SK-N-SH (cell line): ENCODE measurements at regions of chr17 and their contacts with region 1.

Region 1: DNA sequence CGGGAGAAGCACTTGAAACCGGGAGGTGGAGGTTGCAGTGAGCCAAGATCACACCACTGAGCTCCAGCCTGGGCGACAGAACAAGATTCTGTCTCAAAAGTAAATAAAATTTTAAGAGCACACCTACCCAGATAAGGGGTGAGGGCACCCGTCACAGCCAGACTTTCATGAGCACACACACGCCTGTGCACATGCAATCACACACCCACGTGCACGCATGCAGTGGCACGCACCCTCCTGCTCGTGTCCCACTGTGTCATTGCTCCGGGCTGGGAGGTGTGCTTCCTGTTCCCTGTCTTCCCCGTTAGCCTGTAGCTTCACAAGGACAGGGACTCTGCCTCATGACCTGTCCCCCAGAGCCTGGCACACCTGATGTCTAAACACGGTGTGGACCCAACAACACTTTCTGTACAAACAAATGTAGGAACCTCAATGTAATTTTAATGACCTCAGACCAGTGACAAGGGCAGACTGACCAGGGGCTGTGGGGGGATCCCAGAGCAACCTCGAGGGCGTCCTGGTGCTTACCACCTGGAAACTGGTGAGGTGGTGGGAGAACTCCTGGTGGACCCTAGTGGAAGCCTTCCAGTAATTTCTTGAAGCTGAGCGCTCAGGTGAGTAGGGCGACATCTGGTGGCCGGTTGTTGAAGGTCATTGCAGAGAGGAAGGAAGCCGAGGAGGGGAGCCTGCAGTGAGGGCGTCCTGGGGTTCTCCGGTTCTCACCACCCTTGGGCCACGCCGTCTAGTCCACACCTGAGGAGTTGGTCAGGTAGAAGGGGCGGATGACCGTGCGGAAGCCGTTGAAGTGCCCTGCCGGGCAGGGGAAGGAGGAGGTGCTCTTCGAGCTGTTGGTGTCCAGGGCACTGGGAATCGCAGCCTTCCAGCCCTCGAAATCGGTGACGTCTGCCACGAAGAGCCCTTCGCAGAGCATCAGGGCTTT is 8.6 kb downstream of the LGALS3BP start:
- DNase-seq: peak; percentile 93
- H3K4me3 ChIP-seq: peak overlapping the region in 1 of 2 experiments; percentile 9; a peak in 1 of 4 replicates
- H3K27ac ChIP-seq: peak overlapping the region; percentile 9 to 65; a peak in 3 of 4 replicates
- H3K4me1 ChIP-seq: peaks cover 0 to 29% of the 10 kb centered on the region in 2 experiments; a peak in 1 of 4 replicates
- H3K27me3 ChIP-seq: no peaks in the 10 kb centered on the region
- CTCF ChIP-seq: peak; percentile 97
- EP300 ChIP-seq: no peak
- RAD21 ChIP-seq: peak; percentile 96

Region 2: GRCh38 chr17:78736526-78737079 is 234.5 kb before region 1 on chr17:
- CTCF ChIA-PET with region 1: interaction called, 10 read pairs
- POLR2A ChIA-PET with region 1: no interaction called
- DNase-seq: no peak
- H3K4me3 ChIP-seq: no peak overlapping the region
- H3K27ac ChIP-seq: peak overlapping the region; percentile 83 to 85
- H3K4me1 ChIP-seq: peaks cover 33 to 54% of the 10 kb centered on the region in 2 experiments
- H3K27me3 ChIP-seq: no peaks in the 10 kb centered on the region
- CTCF ChIP-seq: no peak
- EP300 ChIP-seq: no peak
- RAD21 ChIP-seq: no peak

Region 3: GRCh38 chr17:78873519-78874340 is 97.4 kb before region 1 on chr17:
- CTCF ChIA-PET with region 1: interaction called, 458 read pairs
- POLR2A ChIA-PET with region 1: interaction called, 5 read pairs
- DNase-seq: peak; percentile 77
- H3K4me3 ChIP-seq: no peak overlapping the region
- H3K27ac ChIP-seq: peak overlapping the region; percentile 50 to 72; a peak in 3 of 4 replicates
- H3K4me1 ChIP-seq: peaks cover 30 to 38% of the 10 kb centered on the region in 2 experiments; a peak in 3 of 4 replicates
- H3K27me3 ChIP-seq: no peaks in the 10 kb centered on the region
- CTCF ChIP-seq: no peak
- EP300 ChIP-seq: peak; percentile 76 to 79; a peak in 2 of 4 replicates
- RAD21 ChIP-seq: peak; percentile 27

Region 4: DNA sequence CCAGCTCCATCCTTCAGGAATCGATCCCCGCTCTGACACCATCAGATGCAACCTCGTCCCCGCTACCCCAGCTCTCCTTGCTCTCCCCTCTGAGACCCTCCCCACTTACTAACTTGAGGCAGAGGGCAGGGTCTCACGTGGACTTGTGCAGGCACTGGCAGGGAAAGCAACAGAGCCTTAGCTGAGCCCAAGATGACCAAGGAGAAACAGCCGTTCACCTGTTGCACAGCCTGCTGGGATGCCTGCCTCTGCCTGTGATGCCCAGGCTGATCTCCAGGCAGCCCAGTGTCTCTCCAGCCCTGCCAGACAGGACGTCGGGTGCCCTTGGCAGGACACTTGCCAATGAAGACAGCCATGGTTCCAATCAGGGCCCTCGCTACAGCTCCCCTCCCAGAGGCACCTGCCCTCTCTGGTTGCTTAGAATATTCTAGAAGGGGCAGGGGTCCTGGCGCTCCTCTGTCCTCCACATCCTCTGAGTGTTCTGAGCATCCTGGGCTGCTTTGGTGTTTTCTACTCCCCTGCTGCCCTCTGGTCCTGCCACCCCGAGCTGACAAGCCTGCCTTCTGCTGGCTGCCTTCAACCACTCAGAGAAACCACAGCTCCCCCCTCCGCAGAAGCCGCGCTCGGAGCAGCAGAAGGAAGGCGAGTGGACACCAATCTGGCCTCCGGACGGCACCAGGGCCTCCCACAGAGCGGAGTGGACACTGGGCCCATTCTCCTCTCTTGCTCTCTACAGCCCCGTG is 74.8 kb before region 1 on chr17:
- CTCF ChIA-PET with region 1: interaction called, 28 read pairs
- POLR2A ChIA-PET with region 1: interaction called, 4 read pairs
- DNase-seq: peak; percentile 39
- H3K4me3 ChIP-seq: no peak overlapping the region
- H3K27ac ChIP-seq: peak overlapping the region in 1 of 2 experiments; percentile 22; a peak in 1 of 4 replicates
- H3K4me1 ChIP-seq: peaks cover 0 to 70% of the 10 kb centered on the region in 2 experiments; a peak in 2 of 4 replicates
- H3K27me3 ChIP-seq: no peaks in the 10 kb centered on the region
- CTCF ChIP-seq: no peak
- EP300 ChIP-seq: no peak
- RAD21 ChIP-seq: no peak

Region 5: DNA sequence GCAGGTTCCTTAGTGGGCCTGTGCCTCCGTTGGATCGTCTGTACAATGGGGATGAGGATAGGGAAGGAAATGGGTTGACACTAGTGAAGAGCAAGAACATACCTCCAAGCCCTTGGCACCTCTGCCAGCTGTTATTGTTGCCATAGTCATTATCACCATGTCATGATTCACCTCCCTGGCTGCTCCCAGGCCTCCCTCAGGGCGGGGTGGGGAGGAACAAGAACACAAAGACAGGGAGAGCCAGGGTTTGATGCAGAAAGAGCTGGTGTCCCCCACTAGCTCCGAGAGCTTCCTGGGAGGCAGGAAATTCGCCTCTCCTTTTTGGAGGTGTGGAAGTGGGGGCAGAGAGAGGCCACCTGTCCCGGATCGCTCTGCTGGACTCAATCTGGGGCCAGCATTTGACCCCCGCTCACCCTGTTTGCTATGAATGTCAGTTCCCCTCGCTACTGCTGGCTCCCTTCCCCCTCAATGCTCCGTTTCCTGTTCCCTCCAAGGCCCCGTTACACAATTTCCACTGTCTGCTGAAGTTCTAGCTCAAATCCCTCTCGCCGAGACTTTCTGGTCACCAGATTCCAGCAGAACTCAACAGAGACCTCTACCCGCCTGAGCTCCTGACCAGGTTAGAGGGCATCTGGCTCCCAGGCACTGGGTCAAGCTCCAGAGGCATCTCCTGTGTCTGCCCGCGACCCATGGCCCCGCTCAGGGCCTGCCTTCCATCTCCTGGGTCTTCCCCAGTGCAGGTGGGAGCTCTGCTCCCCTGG is 55.1 kb before region 1 on chr17:
- CTCF ChIA-PET with region 1: interaction called, 24 read pairs
- POLR2A ChIA-PET with region 1: interaction called, 3 read pairs
- DNase-seq: no peak
- H3K4me3 ChIP-seq: no peak overlapping the region
- H3K27ac ChIP-seq: peak overlapping the region; percentile 8 to 84; a peak in 3 of 4 replicates
- H3K4me1 ChIP-seq: peaks cover 10 to 60% of the 10 kb centered on the region in 2 experiments; a peak in 3 of 4 replicates
- H3K27me3 ChIP-seq: no peaks in the 10 kb centered on the region
- CTCF ChIP-seq: no peak
- EP300 ChIP-seq: no peak
- RAD21 ChIP-seq: no peak

Region 6: DNA sequence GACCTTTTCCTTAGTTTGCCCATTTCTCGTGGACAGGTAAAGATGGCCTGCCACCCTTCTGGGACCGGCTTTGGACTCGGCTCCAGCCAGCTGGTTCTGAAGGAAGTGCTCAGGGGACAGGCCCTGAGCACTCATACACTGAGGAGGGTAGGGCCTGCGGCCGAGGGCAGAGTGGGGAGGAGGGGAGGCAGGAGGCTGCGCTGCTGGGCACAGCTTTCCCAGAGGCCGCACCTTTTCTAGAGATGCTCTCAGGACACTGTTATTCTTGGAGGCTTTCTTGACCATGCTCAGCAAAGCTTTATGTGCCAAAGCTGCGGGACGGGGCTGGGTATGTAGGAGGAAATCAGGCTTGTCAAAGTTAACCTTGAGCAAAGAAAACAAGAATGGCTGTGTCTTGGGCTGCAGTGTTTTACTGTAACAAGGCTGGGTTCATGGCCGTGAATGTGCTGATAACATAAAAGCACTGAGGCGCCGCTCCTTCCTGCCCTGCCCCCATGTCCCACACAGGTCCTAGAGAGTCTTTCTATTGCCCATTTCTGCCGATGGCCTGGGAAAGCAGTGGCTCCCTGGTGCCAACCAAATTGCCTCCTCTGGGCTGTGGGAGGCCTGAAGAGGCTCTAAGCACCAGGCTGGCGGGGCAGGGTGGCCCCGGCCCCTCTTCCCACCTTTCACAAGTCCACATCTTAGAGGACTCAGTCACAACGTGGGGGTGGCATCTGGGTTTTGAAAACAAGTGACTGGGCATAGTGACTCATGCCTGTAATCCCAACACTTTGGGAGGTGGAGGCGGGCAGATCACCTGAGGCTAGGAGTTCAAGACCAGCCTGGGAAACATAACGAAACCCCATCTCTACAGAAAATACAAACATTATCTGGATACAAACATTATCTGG is 23.6 kb before region 1 on chr17:
- CTCF ChIA-PET with region 1: interaction called, 194 read pairs
- POLR2A ChIA-PET with region 1: no interaction called
- DNase-seq: peak; percentile 15
- H3K4me3 ChIP-seq: no peak overlapping the region
- H3K27ac ChIP-seq: no peak overlapping the region
- H3K4me1 ChIP-seq: no peaks in the 10 kb centered on the region
- H3K27me3 ChIP-seq: no peaks in the 10 kb centered on the region
- CTCF ChIP-seq: no peak
- EP300 ChIP-seq: no peak
- RAD21 ChIP-seq: no peak

Region 7: DNA sequence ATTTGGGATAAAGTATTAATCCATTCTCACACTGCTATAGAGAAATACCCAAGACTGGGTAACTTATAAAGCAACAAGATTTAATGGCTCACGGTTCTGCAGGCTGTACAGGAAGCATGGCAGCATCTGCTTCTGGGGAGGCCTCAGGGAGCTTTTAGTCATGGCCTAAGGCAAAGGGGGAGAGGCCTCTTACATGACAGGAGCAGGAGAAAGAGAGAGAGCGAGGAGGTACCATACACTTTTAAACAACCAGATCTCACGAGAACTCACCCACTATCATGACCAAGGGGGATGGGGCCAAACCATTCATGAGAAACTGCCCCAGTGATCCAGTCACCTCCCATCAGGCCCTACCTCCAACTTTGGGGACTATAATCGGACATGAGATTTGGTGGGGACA is 45.8 kb after region 1 on chr17:
- CTCF ChIA-PET with region 1: no interaction called
- POLR2A ChIA-PET with region 1: no interaction called
- DNase-seq: no peak
- H3K4me3 ChIP-seq: no peak overlapping the region
- H3K27ac ChIP-seq: no peak overlapping the region
- H3K4me1 ChIP-seq: peaks cover 0 to 4% of the 10 kb centered on the region in 2 experiments; a peak in 1 of 4 replicates
- H3K27me3 ChIP-seq: no peaks in the 10 kb centered on the region
- CTCF ChIP-seq: no peak
- EP300 ChIP-seq: no peak
- RAD21 ChIP-seq: no peak

Region 8: DNA sequence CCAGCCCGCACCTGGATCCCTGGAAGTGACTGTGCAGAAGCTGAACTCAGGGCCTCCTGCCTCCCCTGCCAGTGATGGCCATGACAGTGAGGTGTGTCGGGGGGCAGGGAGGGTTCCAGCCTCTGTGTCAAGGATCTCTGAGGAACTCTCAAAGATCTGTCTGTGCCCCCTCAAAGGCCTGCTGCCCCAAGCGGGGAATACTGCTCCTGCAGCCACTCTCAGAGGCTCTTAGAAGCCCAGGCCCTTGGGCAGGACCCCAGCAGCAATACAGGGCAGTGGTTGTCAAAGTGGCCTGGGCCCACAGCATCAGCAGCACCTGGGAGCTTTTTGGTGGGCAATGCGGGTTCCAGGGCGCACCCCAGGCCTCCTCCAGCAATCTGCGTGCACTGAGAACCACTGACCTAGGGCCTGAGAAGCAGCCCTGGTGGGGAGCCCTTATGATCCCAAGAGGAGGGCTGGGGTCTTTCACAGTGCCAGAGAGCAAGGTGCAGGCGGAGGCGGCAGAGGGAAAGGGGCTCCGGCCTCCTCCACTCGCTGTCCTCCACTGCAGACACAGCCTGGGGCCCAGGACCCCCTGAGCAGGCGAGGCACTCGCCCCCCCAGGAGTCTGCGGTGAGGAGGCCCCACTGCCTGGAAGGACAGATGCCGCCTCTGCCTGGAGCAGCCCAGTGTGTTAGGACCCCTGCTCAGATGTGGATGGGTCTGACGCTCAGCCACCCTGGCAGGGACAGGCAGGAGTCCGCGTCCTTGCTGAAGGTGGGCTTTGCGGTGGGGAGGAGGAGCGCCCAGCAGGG is 145.7 kb after region 1 on chr17:
- CTCF ChIA-PET with region 1: no interaction called
- POLR2A ChIA-PET with region 1: no interaction called
- DNase-seq: no peak
- H3K4me3 ChIP-seq: no peak overlapping the region
- H3K27ac ChIP-seq: no peak overlapping the region
- H3K4me1 ChIP-seq: peaks cover 0 to 27% of the 10 kb centered on the region in 2 experiments; a peak in 1 of 4 replicates
- H3K27me3 ChIP-seq: peaks cover 35% of the 10 kb centered on the region
- CTCF ChIP-seq: no peak
- EP300 ChIP-seq: no peak
- RAD21 ChIP-seq: no peak

Region 9: GRCh38 chr17:79600681-79601131 is 629.6 kb after region 1 on chr17:
- CTCF ChIA-PET with region 1: no interaction called
- POLR2A ChIA-PET with region 1: no interaction called
- DNase-seq: peak; percentile 60
- H3K4me3 ChIP-seq: no peak overlapping the region
- H3K27ac ChIP-seq: no peak overlapping the region
- H3K4me1 ChIP-seq: peaks cover 0 to 2% of the 10 kb centered on the region in 2 experiments; a peak in 1 of 4 replicates
- H3K27me3 ChIP-seq: peaks cover 58% of the 10 kb centered on the region
- CTCF ChIP-seq: no peak
- EP300 ChIP-seq: no peak
- RAD21 ChIP-seq: no peak